ENCODE measurements at regions of chr6 and their contacts with region 1.

Region 1: GRCh38 chr6:33391278-33391921 is at the start of gene KIFC1:
- DNase-seq: peak; percentile 99
- ATAC-seq: peak; percentile 96
- H3K4me3 ChIP-seq: peak within 1 kb of the TSS; percentile 79
- H3K27ac ChIP-seq: peak within 1 kb of the TSS; percentile 61
- H3K4me1 ChIP-seq: peaks cover 23% of the 10 kb centered on the region
- H3K27me3 ChIP-seq: no peaks in the 10 kb centered on the region
- CTCF ChIP-seq: peak; percentile 89
- total RNA-seq, gene KIFC1: 60.6 and 66.7 TPM in 2 replicates

Region 2: GRCh38 chr6:33410050-33410710 is 18.8 kb after region 1 on chr6:
- CTCF ChIA-PET with region 1: no interaction called
- POLR2A ChIA-PET with region 1: no interaction called
- intact Hi-C with region 1: loop called (anchors 1 kb)
- DNase-seq: peak; percentile 98
- ATAC-seq: peak; percentile 93
- H3K4me3 ChIP-seq: peak overlapping the region; percentile 91
- H3K27ac ChIP-seq: peak overlapping the region; percentile 71
- H3K4me1 ChIP-seq: peaks cover 9% of the 10 kb centered on the region; the same call in 1 of the 2 replicates
- H3K27me3 ChIP-seq: no peaks in the 10 kb centered on the region
- CTCF ChIP-seq: no peak